Naive thymus-derived CD4-positive, alpha-beta T cell (primary cell): ENCODE measurements at regions of chr15 and their contacts with region 1.

Region 1: DNA sequence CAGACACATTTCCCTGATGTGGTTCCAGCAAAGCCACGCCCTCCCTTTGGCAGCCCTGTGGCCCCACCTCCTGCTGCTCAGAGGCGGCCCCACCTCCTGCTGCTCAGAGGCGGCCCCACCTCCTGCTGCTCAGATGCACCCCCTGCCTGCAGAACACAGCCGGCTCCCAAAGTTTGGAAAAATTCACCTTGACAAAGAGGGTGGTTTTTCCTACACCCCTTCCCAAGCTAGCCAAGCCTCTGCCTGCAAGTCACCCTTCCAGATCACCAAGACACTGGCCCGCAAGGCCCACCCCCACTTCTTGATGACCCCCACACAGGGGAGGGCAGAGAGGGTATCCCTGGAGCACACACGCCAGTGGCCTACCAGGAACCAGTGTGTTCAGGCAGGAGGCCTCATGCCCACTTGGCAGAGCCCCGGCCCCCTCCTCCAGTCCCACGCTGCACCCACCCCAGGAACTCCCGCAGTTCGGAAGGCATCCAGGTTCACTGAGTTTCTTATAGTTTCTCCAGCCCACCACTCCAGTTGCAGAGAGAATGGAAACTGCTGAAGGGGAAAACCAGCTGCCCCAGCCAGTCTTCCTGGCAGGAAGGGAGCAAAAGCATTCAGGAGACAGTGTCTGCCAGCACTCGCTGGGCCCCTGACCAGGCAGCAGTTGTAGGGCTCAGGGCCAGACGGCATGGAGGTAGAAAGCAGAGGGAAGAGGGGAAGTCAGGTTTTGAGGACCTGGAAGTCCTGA is 2.3 kb upstream of the HAPLN3 start:
- DNase-seq: peak in 8 of 9 donors; percentile 74 to 85 (median 80)
- ATAC-seq: peak; percentile 75
- H3K4me3 ChIP-seq: peak overlapping the region; percentile 32
- H3K4me3 Mint-ChIP-seq: peak overlapping the region; percentile 24 to 83 (median 60)
- H3K27ac ChIP-seq: no peak overlapping the region
- H3K27ac Mint-ChIP-seq: peak overlapping the region in 8 of 9 donors; percentile 20 to 97 (median 80)
- H3K4me1 ChIP-seq: peaks cover 27 to 38% of the 10 kb centered on the region in 2 donors
- H3K4me1 Mint-ChIP-seq: peaks cover 28 to 62% (median 51%) of the 10 kb centered on the region in 7 donors
- H3K27me3 ChIP-seq: no peaks in the 10 kb centered on the region
- H3K27me3 Mint-ChIP-seq: no peaks in the 10 kb centered on the region

Region 2: DNA sequence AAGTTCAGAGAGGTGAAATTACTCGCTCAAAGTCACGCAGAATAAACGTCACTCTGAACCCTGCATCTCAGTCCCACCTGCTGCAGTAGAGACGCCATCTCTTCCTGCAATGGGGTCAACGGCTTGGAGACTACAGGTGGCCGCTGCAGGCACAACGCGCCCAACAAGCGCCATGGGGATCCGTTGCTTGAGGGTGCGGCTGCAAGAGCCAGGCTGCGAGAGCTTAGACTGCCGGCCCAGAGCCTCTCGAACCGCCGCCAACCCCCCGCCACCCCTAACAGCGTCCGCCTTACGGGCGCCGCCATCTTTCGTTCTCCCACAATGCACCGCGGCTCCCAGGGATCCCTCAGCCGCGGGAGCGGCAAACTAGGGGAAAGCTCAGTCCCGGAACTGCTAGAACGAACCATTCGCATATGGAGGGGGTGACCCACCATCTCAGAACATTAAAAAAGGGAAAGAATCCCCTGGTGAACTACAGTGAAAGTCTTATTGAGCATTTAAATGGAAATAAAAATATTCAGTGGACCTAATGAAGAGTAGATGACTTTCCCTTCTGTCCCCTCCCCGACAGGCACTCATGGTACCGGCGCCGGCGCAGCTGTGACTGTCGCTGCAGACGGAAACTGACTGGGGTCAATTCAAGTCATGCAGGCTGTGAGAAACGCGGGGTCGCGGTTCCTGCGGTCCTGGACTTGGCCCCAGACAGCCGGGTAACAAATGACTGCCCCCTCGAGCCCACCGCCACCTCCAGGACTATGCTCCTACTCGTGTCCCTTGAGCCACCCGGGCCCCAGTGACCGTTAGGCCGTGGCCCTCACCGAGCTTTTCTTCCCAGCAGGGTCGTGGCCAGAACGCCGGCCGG is 430.3 kb before region 1 on chr15 and contains the starts of genes MRPL46 and MRPS11:
- CTCF ChIA-PET with region 1: no interaction called
- POLR2A ChIA-PET with region 1: no interaction called
- intact Hi-C with region 1: loop called (anchors 1 to 2 kb)
- DNase-seq: peak; percentile 78 to 94 (median 91)
- ATAC-seq: peak; percentile 97
- H3K4me3 ChIP-seq: peak within 1 kb of the TSS; percentile 75
- H3K4me3 Mint-ChIP-seq: peak within 1 kb of the TSS; percentile 87 to 98 (median 97)
- H3K27ac ChIP-seq: peak within 1 kb of the TSS; percentile 95
- H3K27ac Mint-ChIP-seq: peak within 1 kb of the TSS; percentile 96 to 99 (median 98)
- H3K4me1 ChIP-seq: peaks cover 0 to 19% of the 10 kb centered on the region in 2 donors
- H3K4me1 Mint-ChIP-seq: peaks cover 18 to 42% (median 29%) of the 10 kb centered on the region in 7 donors
- H3K27me3 ChIP-seq: no peaks in the 10 kb centered on the region
- H3K27me3 Mint-ChIP-seq: no peaks in the 10 kb centered on the region
- total RNA-seq, gene MRPL46: 9.2 to 32.1 (median 28.5) TPM
- total RNA-seq, gene MRPS11: 12.8 to 55.7 (median 24.0) TPM

Region 3: DNA sequence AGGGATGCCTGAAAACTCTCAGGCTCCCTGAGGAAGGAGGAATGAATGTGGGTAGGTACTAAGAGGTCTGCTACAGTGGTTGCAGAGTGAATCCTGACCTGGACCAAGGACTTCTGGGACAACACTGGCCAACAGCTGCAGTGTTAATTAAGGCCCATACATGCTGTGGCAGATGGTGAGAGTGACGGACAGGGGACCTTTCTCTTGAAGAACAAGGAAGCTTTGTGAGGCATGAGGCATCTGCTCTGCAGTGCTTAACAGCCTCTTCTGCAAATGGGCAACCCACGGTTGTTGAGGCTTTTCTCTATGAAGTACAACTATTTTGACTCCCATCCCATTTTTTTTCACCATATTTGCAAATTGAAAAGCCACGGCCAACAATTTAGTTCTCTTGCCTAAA is 121.0 kb before region 1 on chr15:
- CTCF ChIA-PET with region 1: no interaction called
- POLR2A ChIA-PET with region 1: no interaction called
- intact Hi-C with region 1: no loop called
- DNase-seq: no peak
- ATAC-seq: no peak
- H3K4me3 ChIP-seq: no peak overlapping the region
- H3K4me3 Mint-ChIP-seq: no peak overlapping the region
- H3K27ac ChIP-seq: no peak overlapping the region
- H3K27ac Mint-ChIP-seq: no peak overlapping the region
- H3K4me1 ChIP-seq: no peaks in the 10 kb centered on the region
- H3K4me1 Mint-ChIP-seq: no peaks in the 10 kb centered on the region
- H3K27me3 ChIP-seq: no peaks in the 10 kb centered on the region
- H3K27me3 Mint-ChIP-seq: peaks cover 4 to 28% (median 18%) of the 10 kb centered on the region in 5 donors

Region 4: GRCh38 chr15:89003865-89004725 is 106.5 kb after region 1 on chr15:
- CTCF ChIA-PET with region 1: interaction called, 3 read pairs
- POLR2A ChIA-PET with region 1: interaction called, 3 read pairs
- intact Hi-C with region 1: loop called in 1 of 2 experiments (anchors 1 kb)
- DNase-seq: peak in 2 of 9 donors; percentile 5
- ATAC-seq: no peak
- H3K4me3 ChIP-seq: no peak overlapping the region
- H3K4me3 Mint-ChIP-seq: no peak overlapping the region
- H3K27ac ChIP-seq: no peak overlapping the region
- H3K27ac Mint-ChIP-seq: peak overlapping the region in 2 of 9 donors; percentile 12 to 28
- H3K4me1 ChIP-seq: no peaks in the 10 kb centered on the region
- H3K4me1 Mint-ChIP-seq: peaks cover 0 to 6% (median 4%) of the 10 kb centered on the region in 7 donors
- H3K27me3 ChIP-seq: no peaks in the 10 kb centered on the region
- H3K27me3 Mint-ChIP-seq: peaks cover 0 to 10% (median 5%) of the 10 kb centered on the region in 5 donors

Region 5: DNA sequence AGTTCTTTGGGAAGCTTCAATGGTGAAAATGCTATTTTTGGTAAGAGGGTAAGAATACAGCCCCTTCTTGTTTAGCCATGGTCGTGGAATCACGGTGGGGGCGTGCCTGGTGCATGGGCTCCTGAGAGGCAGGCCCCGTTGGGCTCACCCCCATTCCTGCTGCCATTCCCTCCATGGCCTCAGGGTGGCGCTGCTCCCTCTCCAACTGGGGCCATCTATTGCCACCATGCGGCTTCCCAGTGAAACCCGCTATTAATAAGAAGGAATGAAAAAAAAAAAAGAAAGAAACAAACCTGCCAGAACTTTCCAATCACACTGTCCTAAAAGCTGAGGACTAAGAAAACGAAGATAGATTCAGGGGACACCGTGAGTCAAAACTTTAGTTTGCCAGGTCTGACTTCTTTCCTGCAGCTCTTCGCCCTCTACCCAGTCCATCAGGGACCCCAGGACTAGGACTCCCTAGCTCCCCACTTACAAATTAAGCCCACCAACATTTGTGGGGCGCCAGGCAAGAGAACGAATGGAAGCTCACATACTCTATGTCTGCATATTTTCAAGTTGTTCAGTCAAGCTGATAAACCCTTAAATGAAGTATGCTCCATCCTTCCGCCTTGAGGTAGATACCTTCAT is 160.0 kb after region 1 on chr15:
- CTCF ChIA-PET with region 1: interaction called, 5 read pairs
- POLR2A ChIA-PET with region 1: no interaction called
- intact Hi-C with region 1: loop called in 1 of 2 experiments (anchors 1 kb)
- DNase-seq: peak; percentile 66 to 87 (median 78)
- ATAC-seq: peak; percentile 99
- H3K4me3 ChIP-seq: no peak overlapping the region
- H3K4me3 Mint-ChIP-seq: no peak overlapping the region
- H3K27ac ChIP-seq: no peak overlapping the region
- H3K27ac Mint-ChIP-seq: peak overlapping the region in 3 of 9 donors; percentile 25 to 62 (median 26)
- H3K4me1 ChIP-seq: no peaks in the 10 kb centered on the region
- H3K4me1 Mint-ChIP-seq: peaks cover 0 to 11% (median 5%) of the 10 kb centered on the region in 7 donors
- H3K27me3 ChIP-seq: no peaks in the 10 kb centered on the region
- H3K27me3 Mint-ChIP-seq: peaks cover 0 to 3% (median 0%) of the 10 kb centered on the region in 5 donors

Region 6: DNA sequence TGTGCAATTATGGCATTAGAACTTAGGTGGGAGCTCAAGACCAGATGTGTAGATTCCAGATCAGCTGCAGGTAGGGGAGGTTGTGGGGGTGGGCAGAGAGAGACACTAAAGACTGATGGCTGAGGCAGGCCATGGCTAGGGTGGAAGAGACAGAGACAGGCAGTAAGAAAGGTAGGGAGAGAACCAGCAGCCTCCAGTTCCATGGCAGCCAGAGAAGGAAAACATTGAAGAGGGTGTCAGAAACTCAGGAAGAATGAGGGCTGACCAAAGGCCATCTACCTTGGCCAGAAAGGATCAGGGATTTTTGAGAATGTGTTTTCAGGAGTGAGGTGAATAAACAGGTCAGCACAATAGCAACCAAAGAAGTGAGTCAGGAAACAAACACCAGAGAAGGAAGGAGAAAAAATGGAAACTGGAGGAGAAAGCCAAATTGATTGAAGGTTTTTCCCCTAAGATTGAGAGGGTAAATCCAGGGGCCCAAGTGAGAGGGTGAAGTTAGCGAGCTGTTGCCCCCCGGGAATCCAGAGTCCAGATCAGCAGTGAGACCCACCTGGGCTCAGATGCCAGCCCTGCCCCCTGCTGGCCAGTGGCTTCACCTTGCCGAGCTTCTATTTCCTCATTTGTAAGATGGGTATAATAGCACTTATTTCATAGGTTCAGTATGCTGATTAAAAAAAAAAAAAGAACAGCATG is 231.6 kb after region 1 on chr15:
- CTCF ChIA-PET with region 1: interaction called, 35 read pairs
- POLR2A ChIA-PET with region 1: no interaction called
- intact Hi-C with region 1: loop called in 1 of 2 experiments (anchors 1 kb)
- DNase-seq: peak; percentile 23 to 54 (median 45)
- ATAC-seq: peak; percentile 39
- H3K4me3 ChIP-seq: no peak overlapping the region
- H3K4me3 Mint-ChIP-seq: no peak overlapping the region
- H3K27ac ChIP-seq: no peak overlapping the region
- H3K27ac Mint-ChIP-seq: no peak overlapping the region
- H3K4me1 ChIP-seq: peaks cover 10 to 17% of the 10 kb centered on the region in 2 donors
- H3K4me1 Mint-ChIP-seq: peaks cover 10 to 33% (median 17%) of the 10 kb centered on the region in 7 donors
- H3K27me3 ChIP-seq: no peaks in the 10 kb centered on the region
- H3K27me3 Mint-ChIP-seq: no peaks in the 10 kb centered on the region

Region 7: GRCh38 chr15:89150762-89151664 is 253.4 kb after region 1 on chr15:
- CTCF ChIA-PET with region 1: no interaction called
- POLR2A ChIA-PET with region 1: no interaction called
- intact Hi-C with region 1: no loop called
- DNase-seq: no peak
- ATAC-seq: peak; percentile 40
- H3K4me3 ChIP-seq: no peak overlapping the region
- H3K4me3 Mint-ChIP-seq: no peak overlapping the region
- H3K27ac ChIP-seq: no peak overlapping the region
- H3K27ac Mint-ChIP-seq: no peak overlapping the region
- H3K4me1 ChIP-seq: no peaks in the 10 kb centered on the region
- H3K4me1 Mint-ChIP-seq: peaks cover 0 to 9% (median 0%) of the 10 kb centered on the region in 7 donors
- H3K27me3 ChIP-seq: no peaks in the 10 kb centered on the region
- H3K27me3 Mint-ChIP-seq: no peaks in the 10 kb centered on the region

Region 8: GRCh38 chr15:89243691-89244471 is 346.3 kb after region 1 on chr15 and contains the start of gene FANCI:
- CTCF ChIA-PET with region 1: no interaction called
- POLR2A ChIA-PET with region 1: no interaction called
- intact Hi-C with region 1: loop called (anchors 1 to 2 kb)
- DNase-seq: peak; percentile 89 to 97 (median 94)
- ATAC-seq: peak; percentile 100
- H3K4me3 ChIP-seq: peak within 1 kb of the TSS; percentile 79
- H3K4me3 Mint-ChIP-seq: peak within 1 kb of the TSS; percentile 86 to 98 (median 94)
- H3K27ac ChIP-seq: peak within 1 kb of the TSS; percentile 65
- H3K27ac Mint-ChIP-seq: peak within 1 kb of the TSS; percentile 78 to 96 (median 84)
- H3K4me1 ChIP-seq: peaks cover 6 to 13% of the 10 kb centered on the region in 2 donors
- H3K4me1 Mint-ChIP-seq: peaks cover 20 to 40% (median 26%) of the 10 kb centered on the region in 7 donors
- H3K27me3 ChIP-seq: no peaks in the 10 kb centered on the region
- H3K27me3 Mint-ChIP-seq: peaks cover 0 to 8% (median 0%) of the 10 kb centered on the region in 5 donors
- total RNA-seq, gene FANCI: 8.0 to 132 (median 9.7) TPM